HCT116 (cell line): ENCODE measurements at regions of chr14 and their contacts with region 1.

Region 1: GRCh38 chr14:20662968-20663732 is 21.2 kb upstream of the RNASE4 start:
- DNase-seq: peak; percentile 92
- ATAC-seq: peak; percentile 92
- H3K4me3 ChIP-seq: peak overlapping the region; percentile 48 to 56
- H3K27ac ChIP-seq: peak overlapping the region; percentile 31
- H3K4me1 ChIP-seq: peaks cover 15 to 31% of the 10 kb centered on the region in 2 experiments
- H3K27me3 ChIP-seq: no peaks in the 10 kb centered on the region
- CTCF ChIP-seq: peak; percentile 50 to 79 (median 70); a peak in 5 of 6 replicates
- POLR2A ChIP-seq: no peak
- RAD21 ChIP-seq: peak; percentile 75

Region 2: DNA sequence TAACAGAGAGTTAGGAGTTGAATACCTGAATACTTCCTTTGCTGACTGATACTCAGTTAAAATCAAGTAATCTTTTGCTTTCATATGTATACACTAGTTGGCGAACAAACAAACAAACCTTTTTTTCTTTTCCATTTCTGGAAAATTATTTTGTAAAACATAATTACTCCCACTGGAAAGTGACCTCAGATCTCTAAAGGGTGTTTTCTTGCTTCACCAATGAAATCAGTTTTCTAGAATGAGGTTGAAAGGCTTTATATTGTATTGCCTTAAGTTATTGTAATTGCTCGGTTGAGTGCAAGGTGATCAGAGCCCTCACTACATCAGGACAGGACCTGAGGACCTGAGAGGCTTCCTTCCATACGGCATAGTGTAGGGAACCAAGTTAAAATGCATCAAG is 732.5 kb before region 1 on chr14 and contains the start of gene OR4K1:
- CTCF ChIA-PET with region 1: no interaction called
- POLR2A ChIA-PET with region 1: no interaction called
- RAD21 ChIA-PET with region 1: no interaction called
- intact Hi-C with region 1: no loop called
- DNase-seq: no peak
- ATAC-seq: no peak
- H3K4me3 ChIP-seq: no peak within 1 kb of the TSS
- H3K27ac ChIP-seq: no peak within 1 kb of the TSS
- H3K4me1 ChIP-seq: no peaks in the 10 kb centered on the region
- H3K27me3 ChIP-seq: no peaks in the 10 kb centered on the region
- CTCF ChIP-seq: no peak
- POLR2A ChIP-seq: no peak
- RAD21 ChIP-seq: no peak
- total RNA-seq, gene OR4K1: not detected

Region 3: GRCh38 chr14:20624495-20625070 is 38.6 kb before region 1 on chr14:
- CTCF ChIA-PET with region 1: no interaction called
- POLR2A ChIA-PET with region 1: no interaction called
- RAD21 ChIA-PET with region 1: no interaction called
- intact Hi-C with region 1: loop called (anchors 2 kb)
- DNase-seq: no peak
- ATAC-seq: peak; percentile 45
- H3K4me3 ChIP-seq: peak overlapping the region; percentile 25 to 32
- H3K27ac ChIP-seq: peak overlapping the region; percentile 6; the same call in 1 of the 2 replicates
- H3K4me1 ChIP-seq: peaks cover 9 to 23% of the 10 kb centered on the region in 2 experiments
- H3K27me3 ChIP-seq: no peaks in the 10 kb centered on the region; the same call in 1 of the 2 replicates
- CTCF ChIP-seq: no peak
- POLR2A ChIP-seq: no peak
- RAD21 ChIP-seq: no peak

Region 4: GRCh38 chr14:20644520-20644919 is 18.6 kb before region 1 on chr14:
- CTCF ChIA-PET with region 1: no interaction called
- POLR2A ChIA-PET with region 1: no interaction called
- RAD21 ChIA-PET with region 1: no interaction called
- intact Hi-C with region 1: no loop called
- DNase-seq: no peak
- ATAC-seq: no peak
- H3K4me3 ChIP-seq: no peak overlapping the region
- H3K27ac ChIP-seq: no peak overlapping the region
- H3K4me1 ChIP-seq: no peaks in the 10 kb centered on the region
- H3K27me3 ChIP-seq: no peaks in the 10 kb centered on the region; the same call in 1 of the 2 replicates
- CTCF ChIP-seq: no peak
- POLR2A ChIP-seq: no peak
- RAD21 ChIP-seq: no peak

Region 5: DNA sequence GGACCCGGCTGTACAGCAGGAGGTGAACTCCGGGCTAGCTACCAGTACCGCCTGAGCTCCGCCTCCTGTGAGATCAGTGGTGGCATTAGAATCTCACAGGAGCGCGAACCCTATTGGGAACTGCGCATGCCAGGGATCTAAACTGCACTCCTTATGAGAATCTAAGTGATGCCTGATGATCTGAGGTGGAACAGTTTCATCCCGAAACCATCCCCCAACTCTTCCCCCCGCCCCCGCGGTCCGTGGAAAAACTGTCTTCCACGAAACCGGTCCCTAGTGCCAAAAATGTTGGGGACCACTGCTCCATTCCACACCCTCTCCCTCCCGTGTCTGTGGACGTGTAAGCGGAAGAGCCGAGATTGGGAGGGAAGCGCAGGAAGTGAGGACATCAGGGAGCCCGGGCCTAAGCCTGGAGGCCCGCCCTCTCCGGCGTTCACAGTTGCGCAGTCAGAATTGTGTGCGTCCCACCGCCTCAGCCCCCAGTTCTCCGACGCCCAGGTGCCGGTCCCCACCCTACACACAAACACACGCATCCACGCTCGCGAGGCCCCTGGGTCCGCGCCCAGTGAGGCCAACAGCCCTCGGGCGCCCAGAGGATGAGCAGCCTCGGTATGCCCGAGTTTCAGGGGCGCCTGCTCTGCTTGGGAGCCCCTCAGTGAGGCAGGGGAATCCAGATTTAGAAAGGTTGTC is 19.4 kb after region 1 on chr14:
- CTCF ChIA-PET with region 1: interaction called, 59 read pairs
- POLR2A ChIA-PET with region 1: interaction called, 39 read pairs
- RAD21 ChIA-PET with region 1: interaction called, 4 read pairs
- intact Hi-C with region 1: loop called (anchors 1 kb)
- DNase-seq: peak; percentile 88
- ATAC-seq: peak; percentile 61
- H3K4me3 ChIP-seq: peak overlapping the region; percentile 65 to 72
- H3K27ac ChIP-seq: peak overlapping the region; percentile 97
- H3K4me1 ChIP-seq: peaks cover 27 to 64% of the 10 kb centered on the region in 2 experiments
- H3K27me3 ChIP-seq: no peaks in the 10 kb centered on the region
- CTCF ChIP-seq: 0 out of 6 replicates have a peak, but pooled peaks of 1 of the 3 experiments have one; percentile 7
- POLR2A ChIP-seq: peak; percentile 13
- RAD21 ChIP-seq: no peak

Region 6: DNA sequence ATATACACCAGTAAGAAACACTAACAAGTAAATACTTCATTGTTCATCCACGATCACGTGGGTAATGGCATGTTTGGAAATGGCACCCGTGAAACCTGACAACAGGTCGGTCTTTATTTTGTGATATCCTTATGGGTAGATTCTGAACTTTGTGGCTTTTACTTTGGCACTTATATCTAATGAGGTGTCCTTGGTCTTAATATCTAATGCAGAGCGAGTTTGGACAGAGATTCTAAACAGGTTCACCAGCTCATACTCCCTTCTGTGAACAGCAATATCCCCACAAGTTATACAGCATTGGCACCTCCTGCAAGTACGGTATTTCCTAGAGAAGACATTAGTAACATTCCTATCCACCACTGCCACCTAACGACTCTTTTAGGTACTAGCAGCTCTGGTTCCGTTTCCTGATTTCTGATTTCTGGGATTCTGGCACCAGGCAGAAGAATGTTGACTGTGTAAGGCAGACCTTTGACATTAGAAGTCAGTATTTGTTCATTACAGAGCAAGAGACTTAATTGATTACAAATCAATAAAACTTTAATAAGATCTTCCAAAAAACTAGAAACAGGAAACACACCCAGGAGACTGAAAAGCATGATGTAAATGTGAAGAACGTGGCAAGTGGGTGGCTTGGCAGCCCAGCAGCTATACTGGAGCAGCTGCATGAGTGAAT is 27.8 kb after region 1 on chr14:
- CTCF ChIA-PET with region 1: interaction called, 17 read pairs
- POLR2A ChIA-PET with region 1: no interaction called
- RAD21 ChIA-PET with region 1: interaction called in 1 of 2 experiments, 7 read pairs
- intact Hi-C with region 1: loop called (anchors 1 kb)
- DNase-seq: peak; percentile 60
- ATAC-seq: peak; percentile 93
- H3K4me3 ChIP-seq: no peak overlapping the region
- H3K27ac ChIP-seq: no peak overlapping the region
- H3K4me1 ChIP-seq: peaks cover 0 to 8% of the 10 kb centered on the region in 2 experiments; a peak in 2 of 4 replicates
- H3K27me3 ChIP-seq: no peaks in the 10 kb centered on the region
- CTCF ChIP-seq: peak; percentile 84 to 89 (median 86)
- POLR2A ChIP-seq: no peak
- RAD21 ChIP-seq: peak; percentile 84